Caki2 (cell line): ENCODE measurements at regions of chr2 and their contacts with region 1.

Region 1: DNA sequence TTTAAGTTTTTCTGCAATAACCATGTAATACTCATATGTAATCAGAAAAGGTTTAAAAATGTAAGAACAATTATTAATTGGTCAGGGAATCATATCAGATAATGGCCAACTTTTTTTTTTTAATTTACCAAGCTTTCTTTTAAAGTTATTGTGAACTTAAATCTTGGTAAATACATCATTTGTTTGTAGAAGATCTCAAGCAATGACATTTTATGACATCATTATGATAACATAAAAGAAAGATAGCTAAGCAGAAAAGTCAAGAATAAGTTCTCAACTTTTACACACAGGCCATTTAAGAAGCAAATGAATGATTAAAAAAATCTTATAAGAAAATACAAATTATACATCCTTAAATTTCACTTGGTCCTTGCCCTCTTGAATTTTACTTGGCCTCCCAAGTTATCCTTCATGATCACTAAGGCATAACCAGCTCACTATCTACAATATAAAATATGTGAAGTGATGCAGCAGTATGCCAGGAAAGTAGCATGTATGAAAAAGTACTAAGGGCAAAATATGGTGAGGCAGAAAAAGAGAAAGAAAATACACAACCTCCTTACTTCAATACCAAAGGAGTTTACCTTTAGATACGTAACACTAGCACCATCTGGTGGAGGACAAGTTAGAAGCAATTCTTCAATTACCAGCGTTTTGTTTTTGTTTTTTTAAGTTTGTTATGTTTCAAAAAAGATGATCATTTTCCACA is 116.6 kb downstream of the SRBD1 start:
- DNase-seq: peak; percentile 53

Region 2: DNA sequence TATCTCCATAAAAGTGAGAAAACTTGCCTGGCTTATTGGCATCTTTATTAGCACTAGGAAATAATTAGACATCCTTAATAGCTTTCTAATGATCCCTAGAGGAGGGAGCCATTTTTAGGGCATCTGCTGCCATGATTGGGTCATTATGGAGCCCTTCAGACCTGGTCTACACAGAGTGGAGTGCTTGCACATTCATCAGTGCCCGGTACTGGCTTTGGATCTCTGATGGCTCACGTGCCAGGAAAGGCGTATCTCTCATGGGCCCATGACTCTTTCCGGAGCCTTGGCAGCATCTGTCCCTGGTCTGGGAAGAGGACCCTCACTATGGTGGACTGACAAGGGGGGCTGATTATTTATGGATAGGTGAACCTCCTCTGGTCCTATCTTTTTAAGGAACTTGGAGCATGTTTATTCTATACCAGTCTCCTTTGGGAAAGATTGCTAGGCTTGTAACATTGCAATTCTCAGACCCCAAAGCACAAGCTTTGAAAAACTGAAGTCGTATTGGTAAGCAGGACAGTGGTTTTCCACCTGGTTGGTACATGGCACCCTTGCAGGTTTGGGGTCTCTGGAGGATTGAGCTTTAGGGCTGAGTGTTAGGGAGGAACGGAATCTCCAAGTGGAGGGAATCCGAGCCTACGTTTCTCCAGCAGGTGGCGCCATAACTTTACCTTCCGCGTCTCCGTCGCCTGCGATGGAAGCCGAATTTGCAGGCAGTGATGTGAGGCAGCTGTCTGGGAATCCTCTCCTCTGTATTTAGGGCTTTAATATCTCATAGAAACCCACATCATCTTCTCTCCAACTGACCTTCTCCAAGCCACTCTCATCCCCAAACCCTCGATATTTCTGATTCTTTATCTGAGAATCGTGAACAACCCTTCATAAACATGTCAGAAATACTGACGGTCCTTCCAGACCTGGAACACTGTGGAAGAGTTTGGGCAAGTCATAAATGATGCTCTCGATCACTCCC is 513.0 kb before region 1 on chr2:
- in situ Hi-C with region 1: loop called (anchors 25 kb)
- DNase-seq: peak; percentile 56

Region 3: DNA sequence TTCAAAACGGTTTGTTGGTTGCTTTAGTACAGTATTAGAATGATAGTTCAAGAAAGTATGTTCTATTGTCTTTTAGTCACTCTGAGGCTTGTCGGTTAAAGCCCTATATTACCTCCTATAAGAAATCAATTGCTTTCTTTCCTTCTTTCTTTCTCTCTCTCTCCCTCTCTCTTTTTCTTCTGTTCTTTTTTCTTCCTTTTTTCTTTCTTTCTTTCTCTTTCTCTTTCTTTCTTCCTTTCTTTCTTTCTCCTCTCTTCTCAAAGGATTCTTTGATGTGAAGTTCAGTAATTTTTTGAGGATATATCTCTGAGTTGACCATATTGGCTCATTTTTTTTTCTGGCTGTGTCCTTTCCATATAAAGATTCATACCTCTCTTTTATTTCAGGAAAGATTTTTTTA is 132.8 kb before region 1 on chr2:
- in situ Hi-C with region 1: no loop called
- DNase-seq: no peak

Region 4: DNA sequence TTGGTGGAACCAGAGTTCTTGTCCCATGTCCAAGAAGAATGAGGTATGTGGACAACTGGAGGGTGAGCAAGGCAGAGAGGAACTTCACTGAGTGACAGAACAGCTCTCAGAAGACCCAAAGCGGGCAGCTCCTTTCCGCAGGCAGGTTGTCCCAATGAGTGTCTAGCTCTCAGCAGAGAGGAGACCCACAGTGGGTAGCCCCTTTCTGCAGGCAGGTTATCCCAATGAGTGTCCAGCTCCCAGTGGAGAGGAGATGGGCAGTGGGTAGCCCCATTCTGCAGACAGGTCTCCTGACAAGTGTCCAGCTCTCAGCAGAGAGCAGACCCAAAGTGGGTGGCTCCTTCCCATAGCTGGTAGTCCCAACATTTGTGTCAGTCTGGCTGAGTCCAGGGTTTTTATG is 47.0 kb after region 1 on chr2:
- in situ Hi-C with region 1: no loop called
- DNase-seq: peak; percentile 6

Region 5: DNA sequence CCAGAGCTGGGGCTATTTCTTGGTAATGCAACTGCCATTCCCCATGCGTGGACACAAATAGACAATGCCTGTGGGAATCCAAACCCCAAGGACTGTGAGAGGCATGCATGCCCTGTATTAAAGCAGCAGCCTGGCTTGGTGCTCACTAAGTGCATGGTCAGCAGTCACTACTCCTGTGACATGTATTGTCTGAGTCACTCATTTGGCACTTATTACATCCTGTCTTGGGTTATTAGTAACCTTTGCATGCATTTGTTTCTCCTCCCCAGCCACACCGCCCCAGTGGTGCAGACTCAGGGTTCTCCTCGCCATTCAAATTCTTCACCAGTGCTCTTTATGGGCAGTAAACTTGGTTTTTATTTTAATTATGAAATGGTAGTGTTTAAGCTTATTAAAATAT is 187.3 kb after region 1 on chr2:
- in situ Hi-C with region 1: no loop called
- DNase-seq: peak; percentile 68